Activated CD4-positive, alpha-beta memory T cell treated with anti-CD3 and anti-CD28 coated beads, Interleukin-2, amount 10 ng/mL, durations not matched to agents 7 days and 5 days (primary cell): ENCODE measurements at regions of chr6 and their contacts with region 1.

Region 1: DNA sequence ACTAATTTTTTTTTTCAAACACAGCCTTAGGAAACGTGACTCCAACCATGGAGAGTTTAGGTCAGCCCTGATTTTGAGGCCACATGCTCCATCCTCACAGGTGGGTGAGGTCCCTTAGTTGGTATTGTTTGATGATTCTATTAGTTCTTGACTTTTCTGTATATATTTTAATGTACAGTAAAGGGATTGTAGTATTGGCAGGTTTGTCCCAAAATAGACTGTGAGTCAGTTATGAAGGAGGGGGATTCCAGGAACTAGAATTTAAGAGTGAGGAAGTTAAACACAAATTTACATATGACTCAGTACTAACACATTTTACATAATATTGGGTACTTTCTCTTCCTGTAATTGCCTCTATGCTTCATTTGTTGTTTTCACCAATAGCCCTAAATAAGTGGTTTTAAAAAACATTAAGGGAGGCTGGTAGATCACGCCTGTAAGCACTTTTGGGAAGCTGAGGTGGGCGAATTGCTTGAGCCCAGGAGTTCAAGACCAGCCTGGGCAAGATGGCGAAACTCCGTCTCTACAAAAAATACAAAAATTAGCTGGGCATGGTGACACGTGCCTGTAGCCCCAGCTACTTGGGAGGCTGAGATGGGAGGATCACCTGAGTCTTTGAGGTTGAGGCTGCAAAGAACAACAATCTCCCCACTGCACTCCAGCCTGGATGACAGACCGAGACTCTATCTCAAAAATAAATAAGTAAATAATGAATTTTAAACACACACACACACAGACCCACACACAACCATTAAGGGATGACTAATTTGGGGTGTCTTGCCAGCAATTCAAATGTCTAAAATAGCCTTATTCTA is 81.8 kb downstream of the SGK1 start:
- DNase-seq: peak; percentile 21
- H3K4me3 Mint-ChIP-seq: peak overlapping the region; percentile 8
- H3K27ac Mint-ChIP-seq: peak overlapping the region; percentile 84
- H3K4me1 Mint-ChIP-seq: peaks cover 47% of the 10 kb centered on the region
- H3K27me3 Mint-ChIP-seq: no peaks in the 10 kb centered on the region

Region 2: DNA sequence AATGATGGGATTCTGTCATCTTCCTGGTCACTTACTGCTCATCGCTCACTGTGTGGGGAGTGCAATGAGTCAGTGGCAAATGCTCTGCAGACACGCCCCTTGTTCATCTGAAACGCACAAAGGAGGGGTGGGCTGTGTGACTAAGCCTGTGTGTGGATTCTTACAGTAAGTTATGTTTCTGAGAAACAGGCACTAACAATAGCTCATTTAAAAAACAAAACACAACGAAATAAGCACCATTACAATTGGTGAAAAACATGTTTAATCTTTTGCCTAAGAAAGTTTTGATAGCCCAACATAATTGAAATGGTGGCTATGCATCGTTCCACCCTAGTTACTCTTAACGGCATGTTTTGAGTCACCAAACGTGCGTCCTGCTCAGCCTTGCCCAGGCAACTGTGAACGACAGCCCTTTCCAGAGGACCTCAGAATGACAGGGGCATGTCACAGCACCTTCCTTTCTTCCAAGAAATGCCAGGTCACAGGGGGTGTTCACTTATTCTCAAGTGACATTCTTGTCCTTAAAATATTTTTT is 200.2 kb after region 1 on chr6:
- CTCF ChIA-PET with region 1: no interaction called
- POLR2A ChIA-PET with region 1: interaction called, 13 read pairs
- DNase-seq: peak; percentile 82
- H3K4me3 Mint-ChIP-seq: peak overlapping the region; percentile 67
- H3K27ac Mint-ChIP-seq: peak overlapping the region; percentile 93
- H3K4me1 Mint-ChIP-seq: peaks cover 36% of the 10 kb centered on the region
- H3K27me3 Mint-ChIP-seq: no peaks in the 10 kb centered on the region